ENCODE measurements at regions of chr11 and their contacts with region 1.

Region 1: GRCh38 chr11:58059007-58059350 is 28.2 kb downstream of the OR6Q1 start:
- DNase-seq: peak; percentile 92
- ATAC-seq: peak; percentile 81
- H3K4me3 ChIP-seq: no peak overlapping the region
- H3K27ac ChIP-seq: peak overlapping the region; percentile 99
- H3K4me1 ChIP-seq: peaks cover 32% of the 10 kb centered on the region
- H3K27me3 ChIP-seq: no peaks in the 10 kb centered on the region
- CTCF ChIP-seq: no peak
- POLR2A ChIP-seq: no peak
- RAD21 ChIP-seq: peak; percentile 5; the same call in 1 of the 2 replicates

Region 2: GRCh38 chr11:57761301-57762234 is 297.4 kb before region 1 on chr11 and contains the start of gene CTNND1:
- CTCF ChIA-PET with region 1: interaction called, 3 read pairs
- POLR2A ChIA-PET with region 1: no interaction called
- dilution Hi-C with region 1: no loop called
- in situ Hi-C with region 1: no loop called
- intact Hi-C with region 1: loop called (anchors 5 kb)
- DNase-seq: peak; percentile 98
- ATAC-seq: peak; percentile 96
- H3K4me3 ChIP-seq: peak within 1 kb of the TSS; percentile 99
- H3K27ac ChIP-seq: peak within 1 kb of the TSS; percentile 100
- H3K4me1 ChIP-seq: peaks cover 8% of the 10 kb centered on the region
- H3K27me3 ChIP-seq: no peaks in the 10 kb centered on the region
- CTCF ChIP-seq: no peak
- POLR2A ChIP-seq: peak; percentile 84; the same call in 1 of the 2 replicates
- RAD21 ChIP-seq: no peak
- total RNA-seq, gene CTNND1: 193 and 229 TPM in 2 replicates

Region 3: DNA sequence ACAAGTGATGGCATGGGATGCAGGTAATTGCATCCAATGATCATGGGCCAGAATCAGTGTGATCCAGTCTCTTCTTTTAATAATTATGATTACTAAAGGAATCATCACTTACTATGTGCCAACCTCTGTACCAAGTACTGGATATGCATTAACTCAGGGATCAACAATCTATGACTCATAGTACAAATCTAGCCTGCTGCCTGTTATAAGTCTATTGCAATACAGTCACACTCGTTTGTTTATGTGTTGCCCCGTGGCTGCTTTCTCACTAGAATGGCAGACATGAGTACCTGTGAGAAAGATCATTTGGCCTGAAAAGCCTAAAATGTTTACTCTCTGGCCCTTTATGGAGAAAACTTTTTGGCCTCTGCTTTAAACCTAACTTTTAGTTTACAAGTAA is 16.8 kb after region 1 on chr11:
- CTCF ChIA-PET with region 1: no interaction called
- POLR2A ChIA-PET with region 1: no interaction called
- dilution Hi-C with region 1: no loop called
- in situ Hi-C with region 1: no loop called
- intact Hi-C with region 1: loop called (anchors 2 kb)
- DNase-seq: peak; percentile 79
- ATAC-seq: peak; percentile 87
- H3K4me3 ChIP-seq: no peak overlapping the region
- H3K27ac ChIP-seq: no peak overlapping the region; the same call in 1 of the 2 replicates
- H3K4me1 ChIP-seq: peaks cover 6% of the 10 kb centered on the region; the same call in 1 of the 2 replicates
- H3K27me3 ChIP-seq: no peaks in the 10 kb centered on the region
- CTCF ChIP-seq: no peak
- POLR2A ChIP-seq: no peak
- RAD21 ChIP-seq: no peak

Region 4: DNA sequence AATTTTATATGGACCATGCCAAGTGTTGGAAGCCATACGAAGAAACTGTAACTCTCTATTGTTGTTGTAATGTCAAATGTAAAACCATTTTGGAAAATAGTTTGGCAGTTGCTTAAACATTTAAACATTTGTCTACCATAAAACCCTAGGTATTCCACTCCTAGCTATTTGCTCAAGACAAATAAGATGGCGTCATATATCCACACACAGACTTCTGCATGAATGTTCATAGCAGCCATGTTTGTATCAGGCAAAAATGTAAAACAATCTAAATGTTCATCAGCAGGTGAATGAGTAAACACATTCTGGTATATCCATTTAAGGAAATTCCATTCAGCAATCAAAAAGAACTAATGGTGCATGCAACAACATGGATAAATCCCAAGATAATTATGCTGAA is 38.5 kb after region 1 on chr11:
- CTCF ChIA-PET with region 1: no interaction called
- POLR2A ChIA-PET with region 1: no interaction called
- dilution Hi-C with region 1: no loop called
- in situ Hi-C with region 1: no loop called
- intact Hi-C with region 1: no loop called
- DNase-seq: no peak
- ATAC-seq: no peak
- H3K4me3 ChIP-seq: no peak overlapping the region
- H3K27ac ChIP-seq: no peak overlapping the region
- H3K4me1 ChIP-seq: no peaks in the 10 kb centered on the region
- H3K27me3 ChIP-seq: no peaks in the 10 kb centered on the region
- CTCF ChIP-seq: no peak
- POLR2A ChIP-seq: no peak
- RAD21 ChIP-seq: no peak

Region 5: DNA sequence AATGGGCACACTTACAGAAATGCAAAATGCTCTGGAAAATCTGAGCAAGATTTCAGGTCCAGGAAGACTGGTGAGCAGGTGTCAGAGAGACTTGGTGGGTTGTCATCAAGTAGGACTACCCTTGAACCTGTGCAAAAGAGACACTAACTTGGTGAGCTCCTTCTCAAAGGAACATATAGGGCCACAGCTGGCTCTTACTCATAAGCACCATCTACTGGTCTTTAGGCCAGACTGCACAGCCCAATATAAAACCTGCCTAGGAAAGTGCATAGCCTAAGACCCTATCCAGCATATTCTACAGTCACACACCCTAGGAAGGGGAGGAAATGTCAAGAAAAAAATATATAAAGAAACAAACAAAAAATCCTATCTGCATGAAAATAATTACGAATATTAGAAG is 227.3 kb after region 1 on chr11:
- CTCF ChIA-PET with region 1: interaction called, 4 read pairs
- POLR2A ChIA-PET with region 1: no interaction called
- dilution Hi-C with region 1: no loop called
- in situ Hi-C with region 1: no loop called
- intact Hi-C with region 1: loop called (anchors 5 kb)
- DNase-seq: peak; percentile 60
- ATAC-seq: peak; percentile 98
- H3K4me3 ChIP-seq: no peak overlapping the region
- H3K27ac ChIP-seq: no peak overlapping the region
- H3K4me1 ChIP-seq: peaks cover 10% of the 10 kb centered on the region; the same call in 1 of the 2 replicates
- H3K27me3 ChIP-seq: no peaks in the 10 kb centered on the region
- CTCF ChIP-seq: peak; percentile 75
- POLR2A ChIP-seq: no peak
- RAD21 ChIP-seq: peak; percentile 76

Measured in IMR-90 (cell line).